Mammary epithelial cell (primary cell): ENCODE measurements at regions of chr19 and their contacts with region 1.

Region 1: GRCh38 chr19:21202865-21203494 is 61.1 kb downstream of the ZNF431 start:
- DNase-seq: peak; percentile 38
- H3K4me3 ChIP-seq: no peak overlapping the region
- H3K27ac ChIP-seq: no peak overlapping the region
- H3K4me1 ChIP-seq: no peaks in the 10 kb centered on the region
- H3K27me3 ChIP-seq: no peaks in the 10 kb centered on the region
- CTCF ChIP-seq: peak; percentile 50 to 87

Region 2: GRCh38 chr19:21158523-21159135 is 44.4 kb before region 1 on chr19:
- CTCF ChIA-PET with region 1: interaction called, 17 read pairs
- dilution Hi-C with region 1: no loop called
- in situ Hi-C with region 1: no loop called
- intact Hi-C with region 1: no loop called
- DNase-seq: peak; percentile 57
- H3K4me3 ChIP-seq: no peak overlapping the region
- H3K27ac ChIP-seq: peak overlapping the region; percentile 4
- H3K4me1 ChIP-seq: peaks cover 8% of the 10 kb centered on the region
- H3K27me3 ChIP-seq: no peaks in the 10 kb centered on the region
- CTCF ChIP-seq: no peak

Region 3: DNA sequence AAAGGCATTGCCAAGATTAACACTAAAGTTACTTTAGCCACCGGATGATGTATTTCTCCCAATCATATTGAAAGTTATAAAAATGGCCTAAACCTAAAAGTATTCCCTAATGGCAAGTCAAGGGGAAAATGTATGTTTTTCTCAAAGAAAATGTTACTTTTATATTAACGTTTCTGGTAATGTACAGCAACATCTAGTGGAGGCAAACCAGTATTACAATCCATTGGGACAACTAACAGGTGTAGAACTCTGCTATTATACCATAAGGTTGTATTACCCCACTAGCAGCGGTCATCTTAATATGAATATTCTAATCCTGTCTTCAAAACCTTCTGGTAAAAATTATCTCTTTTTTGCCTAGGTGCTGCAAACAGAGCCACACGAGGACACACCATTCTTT is 495.2 kb after region 1 on chr19:
- CTCF ChIA-PET with region 1: no interaction called
- dilution Hi-C with region 1: no loop called
- in situ Hi-C with region 1: no loop called
- intact Hi-C with region 1: loop called (anchors 5 kb)
- DNase-seq: peak; percentile 18
- H3K4me3 ChIP-seq: no peak overlapping the region
- H3K27ac ChIP-seq: no peak overlapping the region
- H3K4me1 ChIP-seq: no peaks in the 10 kb centered on the region
- H3K27me3 ChIP-seq: no peaks in the 10 kb centered on the region
- CTCF ChIP-seq: peak; percentile 24 to 58